Activated CD4-positive, alpha-beta memory T cell treated with anti-CD3 and anti-CD28 coated beads for 36 hours (primary cell): ENCODE measurements at regions of chr6 and their contacts with region 1.

Region 1: GRCh38 chr6:127737009-127737486 is 160.1 kb downstream of the C6orf58 start:
- DNase-seq: peak; percentile 30
- H3K4me3 Mint-ChIP-seq: no peak overlapping the region
- H3K27ac Mint-ChIP-seq: peak overlapping the region; percentile 25
- H3K4me1 Mint-ChIP-seq: peaks cover 44% of the 10 kb centered on the region
- H3K27me3 Mint-ChIP-seq: no peaks in the 10 kb centered on the region

Region 2: DNA sequence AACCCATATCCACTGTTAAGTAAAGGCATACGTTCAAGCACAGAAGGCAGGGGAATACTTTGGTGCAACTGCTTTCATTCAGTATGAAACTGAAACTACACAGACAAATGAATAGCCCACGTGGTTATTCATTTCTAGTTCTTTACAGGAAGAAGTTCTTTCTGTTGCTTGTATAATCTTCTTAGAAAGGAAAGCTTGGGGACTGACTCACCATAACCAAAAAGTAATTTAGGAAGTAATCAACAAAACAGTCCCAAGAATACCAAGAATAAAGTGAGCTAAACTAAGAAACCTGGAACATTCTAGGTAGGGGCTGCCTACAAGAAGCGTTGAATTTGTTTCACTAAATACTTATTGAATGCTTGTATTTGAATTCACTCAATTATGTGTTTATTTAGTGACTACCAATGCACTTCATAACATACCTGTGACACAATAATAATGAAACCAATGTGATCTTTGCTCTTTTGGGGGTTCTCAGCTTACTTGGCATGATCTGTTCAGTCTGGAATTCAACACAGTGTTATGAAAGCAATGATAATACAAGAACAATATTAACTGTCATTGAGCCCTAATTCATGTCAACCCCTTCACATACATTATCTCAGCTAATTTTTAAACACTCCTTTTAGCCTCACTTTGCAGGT is 252.7 kb before region 1 on chr6:
- CTCF ChIA-PET with region 1: no interaction called
- POLR2A ChIA-PET with region 1: no interaction called
- intact Hi-C with region 1: loop called (anchors 10 kb)
- DNase-seq: no peak
- H3K4me3 Mint-ChIP-seq: no peak overlapping the region
- H3K27ac Mint-ChIP-seq: peak overlapping the region; percentile 68
- H3K4me1 Mint-ChIP-seq: peaks cover 28% of the 10 kb centered on the region
- H3K27me3 Mint-ChIP-seq: no peaks in the 10 kb centered on the region

Region 3: DNA sequence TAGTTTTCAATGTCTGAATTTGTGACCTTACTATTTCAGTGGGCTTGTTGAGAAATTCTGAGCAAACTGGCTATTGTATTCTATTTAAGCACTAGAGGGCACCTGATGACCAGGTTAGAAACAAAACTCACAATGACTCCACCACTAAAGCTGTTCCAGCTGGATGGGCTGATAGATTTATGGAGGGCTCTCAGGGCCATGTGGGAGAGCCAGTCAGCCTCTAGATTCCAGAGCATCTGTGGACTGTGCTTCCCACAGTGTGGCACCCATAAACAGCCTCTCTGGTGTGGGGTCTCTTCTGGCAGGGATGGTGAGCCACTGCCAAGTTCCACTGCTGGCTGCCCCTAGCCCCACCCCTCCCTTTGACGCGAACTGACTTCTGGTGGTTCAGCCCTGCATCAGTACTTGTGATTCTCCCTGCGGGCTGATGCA is 130.9 kb before region 1 on chr6:
- CTCF ChIA-PET with region 1: no interaction called
- POLR2A ChIA-PET with region 1: no interaction called
- intact Hi-C with region 1: no loop called
- DNase-seq: no peak
- H3K4me3 Mint-ChIP-seq: no peak overlapping the region
- H3K27ac Mint-ChIP-seq: no peak overlapping the region
- H3K4me1 Mint-ChIP-seq: no peaks in the 10 kb centered on the region
- H3K27me3 Mint-ChIP-seq: no peaks in the 10 kb centered on the region

Region 4: GRCh38 chr6:127637830-127638409 is 99.1 kb before region 1 on chr6:
- CTCF ChIA-PET with region 1: no interaction called
- POLR2A ChIA-PET with region 1: no interaction called
- intact Hi-C with region 1: no loop called
- DNase-seq: no peak
- H3K4me3 Mint-ChIP-seq: no peak overlapping the region
- H3K27ac Mint-ChIP-seq: no peak overlapping the region
- H3K4me1 Mint-ChIP-seq: no peaks in the 10 kb centered on the region
- H3K27me3 Mint-ChIP-seq: no peaks in the 10 kb centered on the region

Region 5: DNA sequence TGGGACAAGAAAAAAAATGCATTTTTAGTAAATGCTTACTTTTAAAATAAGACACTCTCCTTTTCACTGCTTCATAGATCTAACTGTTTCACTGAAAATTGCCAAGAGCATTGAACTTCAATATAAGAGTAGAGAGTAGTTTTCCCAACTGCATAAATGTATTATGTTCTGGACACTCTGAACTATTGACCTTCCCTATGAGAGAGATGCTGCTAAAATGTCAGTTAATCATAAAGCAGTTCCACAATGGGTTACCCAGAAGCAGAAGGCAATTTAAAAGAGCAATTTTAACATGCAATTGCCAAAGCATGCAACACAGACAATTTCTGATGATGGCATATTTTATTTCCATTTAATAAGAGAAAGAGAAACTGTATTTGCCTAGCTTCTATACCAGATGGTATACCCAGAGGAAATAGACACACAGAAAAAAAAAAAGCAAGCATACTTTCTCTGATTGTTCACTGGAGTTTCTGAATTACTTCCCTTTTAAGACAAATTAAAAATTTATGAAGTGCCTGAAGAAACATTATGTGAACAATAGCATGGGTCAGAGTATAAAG is 442.9 kb after region 1 on chr6:
- CTCF ChIA-PET with region 1: no interaction called
- POLR2A ChIA-PET with region 1: no interaction called
- intact Hi-C with region 1: loop called (anchors 10 kb)
- DNase-seq: no peak
- H3K4me3 Mint-ChIP-seq: no peak overlapping the region
- H3K27ac Mint-ChIP-seq: no peak overlapping the region
- H3K4me1 Mint-ChIP-seq: no peaks in the 10 kb centered on the region
- H3K27me3 Mint-ChIP-seq: no peaks in the 10 kb centered on the region

Region 6: GRCh38 chr6:128520436-128521281 is 783.6 kb after region 1 on chr6 and contains the start of gene PTPRK:
- CTCF ChIA-PET with region 1: interaction called, 6 read pairs
- POLR2A ChIA-PET with region 1: no interaction called
- intact Hi-C with region 1: loop called (anchors 5 kb)
- DNase-seq: peak; percentile 92
- H3K4me3 Mint-ChIP-seq: peak within 1 kb of the TSS; percentile 85
- H3K27ac Mint-ChIP-seq: peak within 1 kb of the TSS; percentile 23
- H3K4me1 Mint-ChIP-seq: peaks cover 9% of the 10 kb centered on the region
- H3K27me3 Mint-ChIP-seq: peaks cover 55% of the 10 kb centered on the region
- total RNA-seq, gene PTPRK: 1.8 to 2.2 TPM

Region 7: DNA sequence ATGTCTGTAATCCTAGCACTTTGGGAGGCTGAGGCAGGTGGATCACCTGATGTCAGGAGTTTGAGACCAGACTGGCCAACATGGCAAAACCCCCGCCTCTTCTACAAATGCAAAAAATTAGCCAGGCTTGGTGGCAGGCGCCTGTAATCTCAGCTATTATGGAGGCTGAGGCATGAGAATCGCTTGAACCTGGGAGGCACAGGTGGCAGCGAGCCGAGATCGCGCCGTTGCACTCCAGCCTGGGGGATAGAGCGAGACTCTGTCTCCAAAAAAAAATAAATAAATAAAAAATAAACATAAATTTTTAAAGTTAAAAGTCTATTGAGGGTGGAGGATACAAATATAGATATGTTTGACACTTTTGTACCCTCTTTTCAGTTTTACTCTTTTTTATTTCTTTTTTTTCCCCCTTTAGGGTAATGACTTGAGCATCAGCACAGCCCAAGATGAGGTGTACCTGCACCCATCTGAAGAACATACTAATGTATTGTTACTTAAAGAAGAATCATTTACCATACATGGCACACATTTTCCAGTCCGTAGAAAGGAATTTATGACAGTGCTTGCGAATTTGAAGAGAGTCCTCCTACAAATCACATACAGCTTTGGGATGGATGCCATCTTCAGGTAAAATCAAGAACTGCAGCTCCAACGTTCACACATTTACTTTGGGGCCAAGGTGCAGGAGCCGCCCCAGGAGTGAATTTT is 1514.8 kb after region 1 on chr6:
- CTCF ChIA-PET with region 1: interaction called, 4 read pairs
- POLR2A ChIA-PET with region 1: no interaction called
- intact Hi-C with region 1: loop called (anchors 2 kb)
- DNase-seq: peak; percentile 61
- H3K4me3 Mint-ChIP-seq: no peak overlapping the region
- H3K27ac Mint-ChIP-seq: no peak overlapping the region
- H3K4me1 Mint-ChIP-seq: peaks cover 17% of the 10 kb centered on the region
- H3K27me3 Mint-ChIP-seq: peaks cover 17% of the 10 kb centered on the region